ENCODE measurements at regions of chr17 and their contacts with region 1.

Region 1: GRCh38 chr17:700504-701094 is 14.0 kb downstream of the VPS53 start:
- DNase-seq: no peak
- H3K4me3 ChIP-seq: no peak overlapping the region
- H3K27ac ChIP-seq: no peak overlapping the region
- H3K4me1 ChIP-seq: peaks cover 7% of the 10 kb centered on the region
- H3K27me3 ChIP-seq: no peaks in the 10 kb centered on the region
- CTCF ChIP-seq: peak; percentile 46 to 78 (median 66)
- EP300 ChIP-seq: no peak
- POLR2A ChIP-seq: no peak

Region 2: DNA sequence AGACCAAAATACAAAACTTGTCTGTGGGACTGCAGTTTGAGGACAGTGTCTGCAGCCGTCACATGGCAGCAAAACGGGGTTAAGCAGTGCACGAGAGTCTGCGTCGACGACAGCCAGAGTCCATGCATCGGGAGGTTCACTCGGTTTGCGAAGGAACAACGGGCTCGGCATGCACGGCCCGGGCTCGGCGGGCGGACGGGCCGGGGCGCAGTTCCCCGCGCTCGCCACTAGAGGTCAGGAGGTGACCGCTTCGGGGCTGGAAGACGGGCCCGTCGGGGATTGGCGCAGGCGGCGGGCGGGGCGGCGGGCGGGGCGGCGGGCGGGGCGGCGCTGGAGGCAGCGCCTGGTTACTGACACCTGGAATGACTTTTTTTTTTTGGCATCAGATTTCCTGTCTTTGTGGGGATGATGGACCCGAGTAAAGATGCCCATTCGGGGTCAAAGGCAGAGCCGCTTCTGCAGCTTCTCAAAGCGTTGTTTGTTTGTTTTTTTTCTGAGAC is 556.8 kb before region 1 on chr17:
- intact Hi-C with region 1: loop called in 2 of 4 experiments (anchors 5 kb)
- DNase-seq: peak; percentile 81 to 93 (median 88)
- H3K4me3 ChIP-seq: no peak overlapping the region
- H3K27ac ChIP-seq: no peak overlapping the region
- H3K4me1 ChIP-seq: peaks cover 2% of the 10 kb centered on the region
- H3K27me3 ChIP-seq: no peaks in the 10 kb centered on the region
- CTCF ChIP-seq: peak; percentile 75 to 87 (median 85)
- EP300 ChIP-seq: no peak
- POLR2A ChIP-seq: no peak

Region 3: GRCh38 chr17:164303-165235 is 536.0 kb before region 1 on chr17:
- intact Hi-C with region 1: loop called in 2 of 4 experiments (anchors 5 kb)
- DNase-seq: peak; percentile 62 to 79 (median 78)
- H3K4me3 ChIP-seq: no peak overlapping the region
- H3K27ac ChIP-seq: no peak overlapping the region
- H3K4me1 ChIP-seq: no peaks in the 10 kb centered on the region
- H3K27me3 ChIP-seq: no peaks in the 10 kb centered on the region
- CTCF ChIP-seq: peak; percentile 60 to 84 (median 74)
- EP300 ChIP-seq: no peak
- POLR2A ChIP-seq: no peak

Region 4: DNA sequence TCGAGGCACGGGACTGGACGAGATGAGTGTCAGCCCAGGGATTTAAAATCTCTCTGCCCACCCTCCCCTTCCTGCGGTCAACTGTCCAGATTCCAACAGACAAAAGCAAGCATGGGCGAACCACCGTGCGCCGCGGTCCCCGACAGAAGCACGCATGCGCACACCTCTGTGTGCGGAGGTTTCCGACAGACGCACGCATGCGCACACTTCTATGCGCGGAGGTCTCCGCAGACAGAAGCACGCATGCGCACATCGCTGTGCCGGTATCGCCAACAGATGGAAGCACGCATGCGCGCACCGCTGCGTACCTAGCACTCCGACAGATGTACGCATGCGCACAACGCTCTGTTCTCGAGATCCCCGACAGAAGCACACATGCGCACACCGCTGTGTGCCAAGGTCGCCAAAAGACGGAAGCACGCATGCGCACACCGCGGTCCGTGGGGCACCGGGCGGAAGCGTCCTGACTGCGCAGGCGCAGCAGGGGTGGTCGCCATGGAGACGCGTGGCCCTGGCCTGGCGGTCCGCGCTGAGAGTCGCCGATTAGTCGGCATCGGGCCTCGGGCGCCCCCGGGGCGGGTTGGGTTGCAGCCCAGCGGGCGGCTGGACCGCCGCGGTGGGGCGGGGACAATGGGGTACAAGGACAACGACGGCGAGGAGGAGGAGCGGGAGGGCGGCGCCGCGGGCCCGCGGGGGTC is 290.6 kb before region 1 on chr17:
- intact Hi-C with region 1: loop called in 3 of 4 experiments (anchors 5 kb)
- DNase-seq: peak; percentile 100
- H3K4me3 ChIP-seq: peak overlapping the region; percentile 79
- H3K27ac ChIP-seq: peak overlapping the region; percentile 35 to 81
- H3K4me1 ChIP-seq: peaks cover 6% of the 10 kb centered on the region
- H3K27me3 ChIP-seq: no peaks in the 10 kb centered on the region
- CTCF ChIP-seq: peak in 1 of 3 donors; percentile 32
- EP300 ChIP-seq: no peak
- POLR2A ChIP-seq: no peak

Region 5: GRCh38 chr17:422196-422930 is 278.2 kb before region 1 on chr17:
- intact Hi-C with region 1: loop called in 1 of 4 experiments (anchors 5 kb)
- DNase-seq: no peak
- H3K4me3 ChIP-seq: no peak overlapping the region
- H3K27ac ChIP-seq: no peak overlapping the region
- H3K4me1 ChIP-seq: no peaks in the 10 kb centered on the region
- H3K27me3 ChIP-seq: no peaks in the 10 kb centered on the region
- CTCF ChIP-seq: no peak
- EP300 ChIP-seq: no peak
- POLR2A ChIP-seq: no peak

Region 6: GRCh38 chr17:726271-726919 is 25.8 kb after region 1 on chr17:
- intact Hi-C with region 1: no loop called
- DNase-seq: no peak
- H3K4me3 ChIP-seq: no peak overlapping the region
- H3K27ac ChIP-seq: no peak overlapping the region
- H3K4me1 ChIP-seq: no peaks in the 10 kb centered on the region
- H3K27me3 ChIP-seq: no peaks in the 10 kb centered on the region
- CTCF ChIP-seq: no peak
- EP300 ChIP-seq: no peak
- POLR2A ChIP-seq: no peak